ENCODE measurements at regions of chr19 and their contacts with region 1.

Region 1: DNA sequence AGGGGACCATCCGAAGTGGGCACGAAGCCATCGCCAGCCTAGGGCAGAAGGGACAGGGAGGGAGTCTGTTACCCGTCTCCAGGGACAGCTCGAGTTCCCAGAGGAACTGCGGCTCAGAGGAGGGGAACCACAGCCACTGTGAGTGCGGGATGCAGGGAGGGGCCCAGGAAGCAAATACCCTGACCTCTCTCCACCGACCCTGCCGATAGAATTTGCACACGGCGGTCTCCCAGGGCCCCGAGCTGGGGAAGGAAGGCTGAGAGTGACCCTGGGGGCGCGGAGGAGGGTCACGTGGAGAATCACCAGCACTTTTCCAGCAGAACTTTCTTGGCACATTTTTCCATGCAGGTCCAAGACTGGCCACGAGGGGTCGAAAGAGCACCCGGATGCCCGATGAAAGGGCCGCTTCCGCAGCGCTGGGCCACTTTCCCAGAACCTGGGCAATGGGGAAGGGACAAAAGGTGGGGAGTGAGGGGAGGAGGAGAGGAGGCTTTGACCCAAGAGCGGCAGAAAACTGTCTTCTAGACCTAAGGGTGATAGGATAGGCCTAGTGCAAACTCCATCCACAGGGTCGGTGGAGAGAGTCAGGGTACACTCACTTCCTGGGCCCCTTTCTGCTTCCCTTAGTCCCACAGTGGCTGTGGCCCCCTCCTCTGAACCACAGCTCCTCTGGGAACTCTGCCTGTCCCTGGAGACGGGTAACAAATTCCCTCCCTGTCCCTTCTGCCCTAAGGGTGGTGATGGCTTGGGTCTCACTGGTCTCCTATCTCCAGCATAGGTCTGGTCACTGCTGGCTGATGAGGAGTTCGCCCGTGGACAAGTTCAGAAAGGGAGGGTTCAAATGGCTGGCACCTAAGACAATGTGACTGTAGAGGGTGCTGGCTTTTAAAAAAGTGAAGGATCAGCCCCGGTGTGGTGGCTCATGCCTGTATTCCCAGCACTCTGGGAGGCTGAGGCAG is 5.3 kb upstream of the GPR4 start:
- DNase-seq: peak in 4 of 5 donors; percentile 14 to 36 (median 20)
- H3K4me3 ChIP-seq: no peak overlapping the region
- H3K4me3 Mint-ChIP-seq: peak overlapping the region in 3 of 8 donors; percentile 44 to 65 (median 54)
- H3K27ac ChIP-seq: no peak overlapping the region
- H3K27ac Mint-ChIP-seq: peak overlapping the region in 4 of 7 donors; percentile 4 to 89 (median 42)
- H3K4me1 ChIP-seq: peaks cover 9% of the 10 kb centered on the region
- H3K4me1 Mint-ChIP-seq: peaks cover 5 to 11% (median 8%) of the 10 kb centered on the region in 4 donors
- H3K27me3 ChIP-seq: peaks cover 2% of the 10 kb centered on the region
- H3K27me3 Mint-ChIP-seq: peaks cover 7 to 9% of the 10 kb centered on the region in 2 donors

Region 2: GRCh38 chr19:45250832-45251451 is 356.4 kb before region 1 on chr19 and contains the start of gene MARK4:
- CTCF ChIA-PET with region 1: no interaction called
- POLR2A ChIA-PET with region 1: no interaction called
- intact Hi-C with region 1: no loop called
- DNase-seq: peak; percentile 48 to 64 (median 50)
- H3K4me3 ChIP-seq: peak within 1 kb of the TSS; percentile 57 to 66
- H3K4me3 Mint-ChIP-seq: peak within 1 kb of the TSS; percentile 89 to 99 (median 94)
- H3K27ac ChIP-seq: peak within 1 kb of the TSS; percentile 56
- H3K27ac Mint-ChIP-seq: peak within 1 kb of the TSS; percentile 65 to 96 (median 92)
- H3K4me1 ChIP-seq: peaks cover 50% of the 10 kb centered on the region
- H3K4me1 Mint-ChIP-seq: peaks cover 19 to 49% (median 31%) of the 10 kb centered on the region in 4 donors
- H3K27me3 ChIP-seq: no peaks in the 10 kb centered on the region
- H3K27me3 Mint-ChIP-seq: no peaks in the 10 kb centered on the region
- total RNA-seq, gene MARK4: 24.3 to 25.2 TPM

Region 3: DNA sequence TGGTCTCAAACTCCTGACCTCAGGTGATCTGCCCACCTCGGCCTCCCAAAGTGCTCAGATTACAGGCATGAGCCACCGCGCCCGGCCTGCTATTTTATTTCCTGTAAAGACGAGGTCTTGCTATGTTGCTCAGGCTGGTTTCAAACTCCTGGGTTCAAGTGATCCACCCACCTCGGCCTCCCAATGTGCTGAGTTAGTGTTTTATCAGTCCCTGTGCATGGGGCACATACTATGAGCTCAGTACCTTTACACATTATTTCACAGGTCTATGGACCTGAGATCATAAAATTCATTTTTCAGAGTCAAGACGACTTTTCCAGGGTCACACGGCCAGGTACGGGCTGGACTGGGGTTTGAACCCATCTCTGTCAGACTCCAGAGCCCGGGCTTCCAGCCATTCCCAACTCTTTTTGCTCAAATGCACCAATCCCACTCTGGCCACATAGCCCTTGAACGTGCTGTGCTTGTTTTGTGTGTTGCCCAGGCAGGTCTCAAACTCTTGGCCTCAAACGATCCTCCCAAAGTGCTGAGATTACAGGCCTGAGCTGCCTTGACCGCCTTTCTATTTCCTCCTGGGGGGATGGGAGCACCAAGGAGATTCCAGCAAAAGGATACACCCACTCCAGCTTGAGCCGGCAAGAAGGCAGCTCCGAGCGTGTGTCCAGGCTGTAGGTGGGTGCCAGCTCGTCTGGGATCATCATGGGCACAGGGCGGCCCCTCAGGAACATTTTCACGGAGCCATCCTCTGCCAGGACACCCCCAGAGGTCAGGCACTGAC is 30.7 kb after region 1 on chr19:
- CTCF ChIA-PET with region 1: interaction called, 121 read pairs
- POLR2A ChIA-PET with region 1: interaction called, 29 read pairs
- intact Hi-C with region 1: loop called (anchors 1 kb)
- DNase-seq: no peak
- H3K4me3 ChIP-seq: peak overlapping the region in 1 of 2 donors; percentile 93
- H3K4me3 Mint-ChIP-seq: peak overlapping the region; percentile 43 to 98 (median 94)
- H3K27ac ChIP-seq: peak overlapping the region; percentile 69
- H3K27ac Mint-ChIP-seq: peak overlapping the region in 1 of 7 donors; percentile 24
- H3K4me1 ChIP-seq: peaks cover 43% of the 10 kb centered on the region
- H3K4me1 Mint-ChIP-seq: peaks cover 20 to 42% (median 27%) of the 10 kb centered on the region in 4 donors
- H3K27me3 ChIP-seq: no peaks in the 10 kb centered on the region
- H3K27me3 Mint-ChIP-seq: no peaks in the 10 kb centered on the region

Region 4: DNA sequence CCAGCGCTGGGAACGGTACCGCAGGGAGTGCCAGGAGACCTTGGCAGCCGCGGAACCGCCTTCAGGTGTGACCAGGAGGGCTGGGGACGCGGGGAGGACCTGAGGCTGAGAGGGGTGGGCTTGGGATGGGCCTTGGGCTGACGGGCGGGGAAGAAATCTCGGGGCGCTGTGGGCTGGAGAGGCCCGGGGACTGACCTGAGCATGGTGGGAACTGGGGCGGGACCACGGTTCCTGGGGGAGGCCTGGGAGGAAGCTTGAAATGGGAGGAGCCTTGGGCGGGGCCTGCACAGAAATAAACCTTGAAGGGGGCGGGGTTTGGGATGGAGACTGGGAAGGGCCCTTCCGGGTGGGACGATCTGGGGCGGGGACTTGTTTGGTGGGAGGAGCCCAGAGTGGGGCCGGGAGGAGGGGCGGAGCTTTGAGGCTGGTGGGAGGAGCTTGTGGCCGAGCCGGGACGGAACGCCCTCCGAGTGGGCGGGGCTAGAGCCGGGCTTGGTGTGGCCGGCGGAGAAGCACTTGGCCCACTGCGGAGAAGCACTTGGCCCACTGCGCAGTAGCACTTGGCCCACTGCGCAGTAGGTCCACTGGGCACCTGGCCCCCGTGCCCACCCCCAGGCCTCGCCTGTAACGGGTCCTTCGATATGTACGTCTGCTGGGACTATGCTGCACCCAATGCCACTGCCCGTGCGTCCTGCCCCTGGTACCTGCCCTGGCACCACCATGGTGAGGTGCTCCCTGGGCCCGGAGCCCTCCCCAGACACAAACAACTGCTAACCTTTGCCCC is 63.5 kb after region 1 on chr19:
- CTCF ChIA-PET with region 1: no interaction called
- POLR2A ChIA-PET with region 1: no interaction called
- intact Hi-C with region 1: no loop called
- DNase-seq: peak in 2 of 5 donors; percentile 20 to 44
- H3K4me3 ChIP-seq: no peak overlapping the region
- H3K4me3 Mint-ChIP-seq: peak overlapping the region in 4 of 8 donors; percentile 14 to 56 (median 44)
- H3K27ac ChIP-seq: no peak overlapping the region
- H3K27ac Mint-ChIP-seq: peak overlapping the region in 2 of 7 donors; percentile 44 to 65
- H3K4me1 ChIP-seq: peaks cover 29% of the 10 kb centered on the region
- H3K4me1 Mint-ChIP-seq: peaks cover 18 to 37% (median 26%) of the 10 kb centered on the region in 4 donors
- H3K27me3 ChIP-seq: no peaks in the 10 kb centered on the region
- H3K27me3 Mint-ChIP-seq: peaks cover 4 to 17% of the 10 kb centered on the region in 2 donors